AG04450 (cell line): ENCODE measurements at regions of chr16 and their contacts with region 1.

Region 1: DNA sequence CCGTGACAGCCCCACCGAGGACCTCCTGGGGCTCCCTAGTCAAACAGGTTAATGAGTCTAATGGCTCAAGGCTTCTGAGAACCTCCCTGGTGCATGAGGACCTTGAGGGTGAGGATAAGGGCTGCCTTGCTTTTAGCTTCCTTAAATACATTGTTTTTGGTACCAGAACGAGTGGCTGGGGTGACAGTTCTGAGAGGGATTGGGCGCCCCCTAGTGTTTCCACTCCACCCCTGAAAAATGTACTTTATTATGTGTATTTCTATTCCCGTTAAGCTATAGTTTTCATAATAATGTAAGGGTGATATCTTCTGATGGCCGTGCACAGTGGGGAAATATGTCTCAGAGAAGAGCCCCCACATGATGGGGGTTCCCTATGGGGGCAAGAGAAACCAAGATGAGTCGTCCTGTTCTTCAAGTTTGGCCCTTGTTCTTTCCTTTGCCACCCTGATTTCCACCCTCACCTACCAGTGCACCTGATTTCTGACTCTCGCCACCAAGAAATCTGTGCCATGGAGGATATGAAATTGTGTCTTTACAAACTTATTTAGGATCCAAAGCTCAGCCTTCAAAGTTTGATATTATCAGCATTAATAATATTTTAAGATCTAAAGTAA is 14.5 kb upstream of the VWA3A start:
- DNase-seq: peak; percentile 26
- H3K4me3 ChIP-seq: no peak overlapping the region
- H3K27ac ChIP-seq: no peak overlapping the region
- H3K27me3 ChIP-seq: no peaks in the 10 kb centered on the region
- CTCF ChIP-seq: peak; percentile 87

Region 2: DNA sequence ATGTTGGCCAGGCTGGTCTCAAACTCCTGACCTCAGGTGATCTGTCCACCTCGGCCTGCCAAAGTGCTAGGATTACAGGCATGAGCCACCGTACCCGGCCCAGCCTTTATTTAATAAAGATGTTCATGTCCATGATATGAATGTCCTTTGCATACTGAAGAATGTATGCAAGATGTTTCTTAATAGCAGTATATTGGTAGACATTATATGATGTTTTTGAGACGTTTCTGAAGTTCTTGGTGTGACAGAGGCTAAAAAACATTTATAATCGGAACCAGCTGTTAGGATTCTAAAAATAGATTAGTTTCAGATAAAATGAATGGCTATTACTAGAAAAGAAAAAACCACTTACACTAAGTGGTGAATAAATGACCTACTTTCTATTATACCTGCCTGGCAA is 88.7 kb before region 1 on chr16:
- CTCF ChIA-PET with region 1: interaction called, 39 read pairs
- POLR2A ChIA-PET with region 1: no interaction called
- DNase-seq: no peak
- H3K4me3 ChIP-seq: no peak overlapping the region
- H3K27ac ChIP-seq: no peak overlapping the region
- H3K27me3 ChIP-seq: no peaks in the 10 kb centered on the region
- CTCF ChIP-seq: no peak

Region 3: DNA sequence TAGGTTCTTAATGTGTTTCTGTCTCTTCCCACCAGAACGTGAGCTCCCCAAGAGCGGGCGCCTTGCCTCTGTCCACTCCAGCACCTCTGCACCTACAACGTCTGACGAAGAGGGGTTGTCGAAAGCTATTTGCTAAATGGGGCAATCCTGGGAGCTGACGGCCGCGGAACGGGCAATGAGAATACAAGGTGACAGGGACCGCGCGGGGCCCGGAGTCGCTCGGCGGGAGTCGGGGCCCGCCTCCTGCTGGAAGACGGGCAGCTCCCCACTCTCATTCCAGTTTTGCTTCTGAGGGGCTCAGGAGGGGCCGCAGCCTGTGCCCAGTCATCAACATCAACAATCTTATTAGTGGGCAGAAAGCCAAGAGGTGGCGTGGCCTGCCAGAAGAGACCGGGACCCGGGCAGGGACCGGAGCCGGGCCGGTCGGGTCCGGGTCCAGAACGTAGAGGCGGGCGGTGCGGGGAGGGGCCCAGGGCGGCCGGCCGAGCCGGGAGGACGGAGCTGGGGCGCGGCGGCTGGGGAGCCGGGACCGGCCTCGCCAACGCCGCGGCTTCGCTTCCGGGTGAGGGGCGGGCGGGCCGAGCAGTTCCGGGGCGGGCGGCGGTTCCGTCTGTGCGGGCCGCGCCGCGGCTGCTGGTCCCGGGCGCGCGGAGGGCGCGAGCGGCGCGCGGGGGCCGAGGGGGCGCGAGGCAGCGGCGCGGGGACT is 70.1 kb before region 1 on chr16 and contains the start of gene MOSMO:
- CTCF ChIA-PET with region 1: interaction called, 365 read pairs
- POLR2A ChIA-PET with region 1: interaction called, 10 read pairs
- DNase-seq: no peak
- H3K4me3 ChIP-seq: peak within 1 kb of the TSS; percentile 77
- H3K27ac ChIP-seq: peak within 1 kb of the TSS; percentile 25
- H3K27me3 ChIP-seq: no peaks in the 10 kb centered on the region
- CTCF ChIP-seq: no peak
- polyA plus RNA-seq, gene MOSMO: 15.6 and 15.8 TPM in 2 replicates

Region 4: DNA sequence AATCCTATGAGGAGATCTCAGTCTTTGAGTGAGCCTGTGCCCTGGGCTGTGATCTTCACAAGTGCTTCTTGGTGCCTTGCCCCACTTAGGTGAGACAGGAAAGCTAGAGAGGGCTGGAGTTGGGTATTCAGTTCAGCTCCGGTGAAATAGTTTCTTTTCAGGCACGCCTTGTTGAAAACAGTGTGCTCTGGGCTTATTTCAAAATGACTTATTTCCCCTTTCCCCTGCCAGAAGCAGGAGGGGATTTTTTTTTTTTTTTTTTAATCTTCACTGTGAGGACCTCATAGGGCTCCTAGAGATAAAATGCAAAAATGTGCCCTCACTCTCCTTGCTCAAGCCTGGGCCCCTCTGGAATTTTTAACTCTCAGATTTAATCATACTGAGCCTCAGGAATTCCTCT is 42.7 kb before region 1 on chr16:
- CTCF ChIA-PET with region 1: interaction called, 69 read pairs
- POLR2A ChIA-PET with region 1: no interaction called
- DNase-seq: no peak
- H3K4me3 ChIP-seq: no peak overlapping the region
- H3K27ac ChIP-seq: no peak overlapping the region
- H3K27me3 ChIP-seq: no peaks in the 10 kb centered on the region
- CTCF ChIP-seq: no peak

Region 5: GRCh38 chr16:22091758-22092600 is 14.2 kb after region 1 on chr16 and contains the start of gene VWA3A:
- CTCF ChIA-PET with region 1: interaction called, 96 read pairs
- POLR2A ChIA-PET with region 1: no interaction called
- DNase-seq: peak; percentile 27
- H3K4me3 ChIP-seq: no peak within 1 kb of the TSS
- H3K27ac ChIP-seq: peak within 1 kb of the TSS; percentile 61
- H3K27me3 ChIP-seq: peaks cover 6% of the 10 kb centered on the region
- CTCF ChIP-seq: no peak
- polyA plus RNA-seq, gene VWA3A: not detected in 2 replicates

Region 6: DNA sequence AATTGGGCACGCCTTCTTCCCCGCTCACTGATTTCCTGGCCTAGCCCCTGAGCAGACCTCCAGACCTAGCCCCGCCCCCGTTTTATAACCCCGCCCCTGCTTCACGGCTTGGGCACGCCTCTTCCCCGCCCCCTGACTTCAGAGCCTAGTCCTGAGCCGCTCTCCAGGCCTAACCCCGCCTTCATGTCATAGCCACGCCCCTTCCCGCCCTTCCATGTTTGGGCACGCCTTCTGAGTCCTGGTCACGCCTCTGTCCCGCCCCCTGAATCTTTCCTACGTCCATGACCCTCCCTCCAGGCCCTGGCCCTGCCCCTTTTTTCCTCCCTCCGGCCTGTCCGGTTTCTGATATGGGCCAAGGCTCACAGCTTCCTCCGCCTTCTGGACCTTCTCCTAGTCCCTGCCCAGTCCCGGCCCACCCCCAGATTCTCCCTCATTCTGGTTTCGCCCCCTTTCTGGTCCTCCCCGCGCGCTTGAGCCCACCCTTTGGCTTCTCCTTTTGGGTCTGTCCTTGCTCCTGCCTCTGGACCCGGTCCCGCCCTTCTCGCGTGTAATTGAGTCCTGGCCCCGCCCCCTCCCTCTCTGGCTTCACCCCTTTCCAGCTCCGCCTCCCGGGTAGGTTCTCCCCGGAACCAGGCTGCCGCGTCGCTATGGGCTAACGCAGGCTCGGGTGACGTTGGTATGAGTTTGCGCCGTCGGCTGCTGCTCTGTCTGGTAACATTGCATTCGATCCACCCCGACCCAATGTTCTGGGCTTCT is 113.1 kb after region 1 on chr16:
- CTCF ChIA-PET with region 1: interaction called, 66 read pairs
- POLR2A ChIA-PET with region 1: no interaction called
- DNase-seq: peak; percentile 100
- H3K4me3 ChIP-seq: peak overlapping the region; percentile 70
- H3K27ac ChIP-seq: peak overlapping the region; percentile 98
- H3K27me3 ChIP-seq: no peaks in the 10 kb centered on the region
- CTCF ChIP-seq: no peak